ENCODE measurements at regions of chr3 and their contacts with region 1.

Region 1: GRCh38 chr3:71087143-71088018 is 496.1 kb downstream of the FOXP1 start:
- DNase-seq: no peak
- ATAC-seq: peak; percentile 56
- H3K4me3 Mint-ChIP-seq: peak overlapping the region; percentile 54
- H3K27ac Mint-ChIP-seq: peak overlapping the region; percentile 99
- H3K4me1 Mint-ChIP-seq: peaks cover 97% of the 10 kb centered on the region
- H3K27me3 Mint-ChIP-seq: no peaks in the 10 kb centered on the region
- CTCF ChIP-seq: no peak

Region 2: DNA sequence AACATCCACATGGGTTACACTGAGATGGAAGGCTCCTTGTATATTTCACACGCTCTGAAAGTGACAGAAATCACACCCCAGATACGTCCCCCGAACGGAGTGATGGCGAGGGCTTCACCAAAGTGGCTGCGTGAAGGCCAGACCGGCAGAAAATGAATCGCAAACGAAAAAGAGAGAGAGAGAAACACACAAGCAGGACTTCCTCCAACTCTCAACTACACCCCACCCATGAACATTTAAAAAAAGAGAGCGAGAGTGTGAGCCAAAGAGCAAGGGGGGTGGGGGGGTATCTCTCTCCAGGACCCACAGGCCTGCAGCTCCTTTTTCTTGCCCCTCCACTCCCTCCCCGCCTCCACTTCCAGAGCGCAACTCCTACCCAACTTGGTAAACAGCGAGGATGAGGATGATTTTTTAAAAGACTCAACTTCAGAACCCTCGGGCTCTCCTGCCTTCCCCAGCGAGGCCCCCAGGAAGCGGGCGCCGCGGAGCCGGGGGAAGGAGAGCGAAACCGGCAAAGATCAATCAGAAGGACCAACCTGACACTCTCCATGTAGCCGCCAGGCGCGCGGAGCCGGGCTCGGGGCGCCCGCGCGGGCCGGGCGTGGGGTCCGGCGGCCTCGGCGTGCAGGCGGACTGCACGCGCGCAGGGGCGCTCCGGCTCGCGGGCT is 23.0 kb before region 1 on chr3:
- CTCF ChIA-PET with region 1: interaction called, 3 read pairs
- POLR2A ChIA-PET with region 1: interaction called, 785 read pairs
- intact Hi-C with region 1: loop called (anchors 1 kb)
- DNase-seq: peak; percentile 64
- ATAC-seq: peak; percentile 33
- H3K4me3 Mint-ChIP-seq: no peak overlapping the region
- H3K27ac Mint-ChIP-seq: no peak overlapping the region
- H3K4me1 Mint-ChIP-seq: peaks cover 67% of the 10 kb centered on the region
- H3K27me3 Mint-ChIP-seq: no peaks in the 10 kb centered on the region
- CTCF ChIP-seq: no peak

Region 3: DNA sequence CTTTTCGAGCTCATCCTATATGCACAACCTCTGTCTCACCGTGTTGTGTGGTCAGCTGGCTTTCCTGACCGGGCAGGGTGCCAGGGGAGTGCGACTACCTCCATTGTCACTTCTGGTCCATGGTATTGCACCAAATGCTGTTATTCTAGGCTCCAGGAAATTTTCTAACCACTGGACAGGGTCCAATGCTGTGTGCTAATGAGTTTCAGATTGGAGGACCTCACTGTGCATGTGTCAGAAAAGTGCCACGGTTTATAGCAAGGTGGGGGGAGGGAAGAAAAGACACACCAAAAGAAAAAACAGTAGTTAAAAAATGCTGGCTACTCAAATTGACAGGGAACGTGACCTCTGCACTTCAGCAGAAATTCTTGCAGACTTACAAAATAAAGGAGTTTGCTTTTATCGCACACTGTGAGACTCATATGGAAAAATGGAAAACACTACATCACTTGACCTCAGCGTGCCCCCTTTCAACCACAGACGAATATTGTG is 16.1 kb after region 1 on chr3:
- CTCF ChIA-PET with region 1: no interaction called
- POLR2A ChIA-PET with region 1: interaction called, 785 read pairs
- intact Hi-C with region 1: loop called (anchors 1 kb)
- DNase-seq: no peak
- ATAC-seq: no peak
- H3K4me3 Mint-ChIP-seq: no peak overlapping the region
- H3K27ac Mint-ChIP-seq: peak overlapping the region; percentile 71
- H3K4me1 Mint-ChIP-seq: peaks cover 94% of the 10 kb centered on the region
- H3K27me3 Mint-ChIP-seq: no peaks in the 10 kb centered on the region
- CTCF ChIP-seq: no peak

Region 4: DNA sequence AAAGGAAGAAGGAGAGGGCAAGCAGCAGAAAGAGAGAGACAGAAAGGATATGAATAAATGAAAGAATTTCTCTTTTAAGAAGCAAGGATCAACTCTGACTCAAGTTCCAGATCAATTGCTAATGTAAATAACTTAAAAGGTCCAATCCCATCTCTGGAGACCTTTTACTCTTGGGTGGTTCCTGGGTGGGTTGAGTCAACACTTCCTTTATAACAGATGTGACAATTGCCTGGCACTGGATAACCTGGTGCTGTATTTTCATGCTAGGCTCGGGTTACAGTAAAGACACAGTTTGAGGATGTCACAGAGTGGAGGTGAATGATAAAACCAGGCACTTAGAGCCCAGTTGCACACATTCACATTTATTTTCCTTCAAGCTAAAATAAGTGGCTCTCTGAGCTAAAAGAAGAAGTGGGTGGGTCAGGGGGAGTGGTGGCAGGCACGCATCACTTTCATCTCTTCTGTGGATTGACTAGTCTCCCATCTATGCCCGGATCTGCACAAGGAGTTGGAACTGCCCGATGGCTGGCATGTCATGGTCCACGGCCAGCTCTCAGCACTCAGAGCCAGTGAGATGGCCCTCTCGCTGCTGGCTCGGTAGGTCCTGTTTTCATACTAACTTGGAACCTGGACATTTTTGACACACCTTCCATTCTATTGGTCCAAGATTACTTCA is 30.3 kb after region 1 on chr3:
- CTCF ChIA-PET with region 1: interaction called, 4 read pairs
- POLR2A ChIA-PET with region 1: interaction called, 138 read pairs
- intact Hi-C with region 1: loop called (anchors 1 kb)
- DNase-seq: no peak
- ATAC-seq: peak; percentile 69
- H3K4me3 Mint-ChIP-seq: peak overlapping the region; percentile 64
- H3K27ac Mint-ChIP-seq: peak overlapping the region; percentile 90
- H3K4me1 Mint-ChIP-seq: peaks cover 85% of the 10 kb centered on the region
- H3K27me3 Mint-ChIP-seq: no peaks in the 10 kb centered on the region
- CTCF ChIP-seq: no peak

Region 5: DNA sequence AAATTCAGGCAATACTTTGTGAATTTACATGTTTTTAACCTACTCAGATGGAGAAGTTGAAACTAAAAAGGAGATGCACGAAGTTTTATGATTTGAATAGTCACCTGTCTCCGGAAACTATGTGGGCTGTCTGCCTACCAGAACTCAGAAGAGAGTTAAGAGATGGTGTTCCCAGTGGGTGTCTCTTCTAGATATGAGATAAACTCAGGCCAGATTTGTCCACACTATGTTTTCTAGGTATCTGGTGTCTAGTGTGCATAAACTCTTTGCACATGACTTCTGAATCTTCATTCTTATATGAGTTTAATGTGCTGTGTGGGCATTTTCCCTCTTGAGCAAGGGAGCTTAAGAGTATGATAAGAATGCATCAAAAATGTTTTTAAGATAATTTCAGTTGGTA is 273.4 kb after region 1 on chr3:
- CTCF ChIA-PET with region 1: no interaction called
- POLR2A ChIA-PET with region 1: interaction called, 4 read pairs
- intact Hi-C with region 1: loop called (anchors 1 kb)
- DNase-seq: no peak
- ATAC-seq: peak; percentile 62
- H3K4me3 Mint-ChIP-seq: peak overlapping the region; percentile 81
- H3K27ac Mint-ChIP-seq: peak overlapping the region; percentile 93
- H3K4me1 Mint-ChIP-seq: peaks cover 88% of the 10 kb centered on the region
- H3K27me3 Mint-ChIP-seq: no peaks in the 10 kb centered on the region
- CTCF ChIP-seq: no peak

Region 6: DNA sequence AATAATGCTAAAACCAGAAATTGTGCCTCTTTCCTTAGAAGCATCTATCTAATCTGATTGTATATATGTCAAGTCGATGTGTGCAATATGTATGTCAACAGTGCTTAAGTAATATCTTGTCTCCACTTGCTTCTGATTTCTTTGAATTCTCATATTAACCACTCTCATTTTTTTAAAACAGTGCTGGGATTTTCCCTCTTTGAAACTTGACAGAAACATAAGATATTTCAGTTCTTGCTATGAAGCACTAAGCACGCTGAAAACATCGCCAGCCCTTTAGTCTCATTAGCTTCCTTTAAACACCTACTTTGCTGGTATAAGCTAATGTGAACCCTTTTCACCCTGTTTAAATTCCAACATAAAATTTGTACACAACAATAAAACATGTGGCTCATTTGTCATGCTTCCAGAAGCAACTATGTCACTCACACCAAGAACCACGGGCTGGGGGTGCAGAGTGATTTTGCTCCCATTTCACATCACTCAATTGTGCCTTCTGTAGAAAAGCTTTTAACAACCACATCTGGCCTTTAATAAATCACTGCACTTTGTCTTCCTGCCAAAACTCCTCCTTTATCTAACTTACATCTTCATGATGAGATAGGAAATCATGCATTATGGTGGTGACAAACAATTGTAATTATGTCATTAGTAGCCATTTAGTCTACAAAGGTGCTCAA is 310.9 kb after region 1 on chr3:
- CTCF ChIA-PET with region 1: no interaction called
- POLR2A ChIA-PET with region 1: no interaction called
- intact Hi-C with region 1: no loop called
- DNase-seq: no peak
- ATAC-seq: peak; percentile 59
- H3K4me3 Mint-ChIP-seq: peak overlapping the region; percentile 36
- H3K27ac Mint-ChIP-seq: peak overlapping the region; percentile 89
- H3K4me1 Mint-ChIP-seq: peaks cover 89% of the 10 kb centered on the region
- H3K27me3 Mint-ChIP-seq: no peaks in the 10 kb centered on the region
- CTCF ChIP-seq: no peak

Measured in activated B cell treated with CpG ODN at 0.5 μM for 24 hours (primary cell).